Activated CD4-positive, alpha-beta T cell treated with anti-CD3 and anti-CD28 coated beads for 36 hours (primary cell): ENCODE measurements at regions of chr11 and their contacts with region 1.

Region 1: GRCh38 chr11:130002846-130003716 is 446 bp upstream of the PRDM10 start:
- DNase-seq: peak; percentile 91
- ATAC-seq: peak; percentile 82
- H3K4me3 Mint-ChIP-seq: peak overlapping the region; percentile 90
- H3K27ac Mint-ChIP-seq: peak overlapping the region; percentile 100
- H3K4me1 Mint-ChIP-seq: peaks cover 32% of the 10 kb centered on the region
- H3K27me3 Mint-ChIP-seq: no peaks in the 10 kb centered on the region

Region 2: GRCh38 chr11:129279326-129280026 is 723.6 kb before region 1 on chr11:
- CTCF ChIA-PET with region 1: no interaction called
- POLR2A ChIA-PET with region 1: interaction called, 3 read pairs
- intact Hi-C with region 1: loop called in 1 of 2 experiments (anchors 1 kb)
- DNase-seq: peak; percentile 79
- ATAC-seq: peak; percentile 30
- H3K4me3 Mint-ChIP-seq: peak overlapping the region; percentile 76
- H3K27ac Mint-ChIP-seq: peak overlapping the region; percentile 90
- H3K4me1 Mint-ChIP-seq: peaks cover 41% of the 10 kb centered on the region
- H3K27me3 Mint-ChIP-seq: peaks cover 14% of the 10 kb centered on the region

Region 3: DNA sequence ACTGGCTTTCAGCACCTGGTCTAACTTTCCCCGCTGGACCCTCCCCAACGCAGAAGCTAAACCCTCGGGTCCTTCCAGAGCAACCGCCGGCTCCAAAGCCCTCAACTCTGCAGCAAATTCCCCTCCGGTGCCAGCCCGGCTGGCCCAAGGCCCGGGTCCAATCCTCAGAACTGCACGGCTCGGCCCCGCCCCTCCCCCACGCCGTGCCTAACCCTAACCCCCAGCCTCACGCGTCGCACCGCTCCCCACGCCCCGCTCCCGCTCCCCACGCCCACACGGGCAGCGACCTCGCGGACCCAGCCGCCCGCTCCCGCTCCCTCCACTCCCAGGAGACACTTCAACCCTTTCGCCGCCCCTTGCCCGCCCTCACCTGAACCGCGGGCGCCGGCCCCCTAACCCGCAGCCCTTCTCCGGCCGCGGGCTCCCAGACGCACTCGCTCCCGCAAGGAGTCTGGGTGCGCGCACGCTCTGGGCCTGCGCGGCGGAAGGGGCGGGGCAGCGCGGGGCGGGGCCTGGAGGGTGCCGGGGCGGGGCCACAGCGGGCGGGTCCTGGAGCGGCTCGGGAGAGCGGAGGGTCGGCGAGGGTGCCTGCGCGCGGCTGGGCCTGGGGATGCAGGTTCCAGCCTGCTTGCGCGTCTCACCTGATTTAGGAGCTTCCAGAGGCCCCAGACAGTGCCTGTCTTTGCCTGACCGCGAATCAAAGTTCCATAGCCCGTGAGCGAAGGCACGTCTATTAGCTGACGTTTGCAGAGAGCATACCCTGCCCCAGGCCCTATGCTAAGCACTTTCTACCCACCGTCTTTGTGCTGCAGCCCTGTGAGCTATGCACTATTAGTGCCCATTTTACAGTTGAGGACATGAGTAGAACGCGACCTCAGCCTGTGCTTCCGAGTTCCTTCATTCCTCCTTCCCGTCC is 107.7 kb before region 1 on chr11 and contains the start of gene NFRKB:
- CTCF ChIA-PET with region 1: interaction called, 3 read pairs
- POLR2A ChIA-PET with region 1: interaction called, 3 read pairs
- intact Hi-C with region 1: loop called in 1 of 2 experiments (anchors 1 kb)
- DNase-seq: peak; percentile 94
- ATAC-seq: peak; percentile 99
- H3K4me3 Mint-ChIP-seq: peak within 1 kb of the TSS; percentile 84
- H3K27ac Mint-ChIP-seq: peak within 1 kb of the TSS; percentile 71
- H3K4me1 Mint-ChIP-seq: peaks cover 41% of the 10 kb centered on the region
- H3K27me3 Mint-ChIP-seq: no peaks in the 10 kb centered on the region
- total RNA-seq, gene NFRKB: 27.3 to 31.0 TPM

Region 4: DNA sequence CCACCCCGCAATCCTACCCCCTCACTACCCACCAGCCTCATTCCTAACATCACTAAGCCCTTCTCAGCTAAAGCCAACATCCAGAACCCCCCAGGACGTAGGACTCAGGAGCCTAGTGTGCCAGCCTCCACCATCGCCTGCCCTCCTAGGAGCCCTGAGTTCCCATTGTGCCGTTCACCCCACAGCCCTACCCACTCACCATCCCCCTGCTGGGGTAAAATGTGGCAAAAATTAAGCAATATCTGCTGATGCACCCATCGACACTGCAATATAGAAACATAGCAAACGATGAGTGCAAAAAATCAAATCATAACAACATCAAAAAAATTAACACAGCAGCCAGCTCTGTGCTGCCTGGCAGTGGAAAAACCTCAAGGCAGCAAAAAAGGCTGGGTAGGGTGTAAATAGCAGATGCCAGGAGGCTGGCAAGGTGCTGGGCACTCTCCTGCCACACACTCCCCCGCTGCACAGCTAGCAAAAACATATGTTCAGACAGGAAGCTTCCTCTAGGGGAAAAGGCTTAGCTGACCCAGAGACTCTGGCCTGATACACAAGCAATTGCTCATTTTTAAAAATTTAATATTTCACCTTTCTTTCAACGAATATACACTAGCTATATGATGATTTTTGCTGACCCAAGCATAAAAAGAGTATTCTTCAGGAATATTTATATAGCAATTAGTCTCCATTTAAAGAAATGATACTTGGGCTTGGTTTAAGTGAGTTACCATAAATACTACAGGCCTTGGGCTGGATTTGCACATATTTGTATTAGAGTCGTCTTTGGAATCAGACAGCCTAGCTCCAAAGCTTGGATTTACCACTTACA is 34.3 kb before region 1 on chr11:
- CTCF ChIA-PET with region 1: no interaction called
- POLR2A ChIA-PET with region 1: no interaction called
- intact Hi-C with region 1: loop called in 1 of 2 experiments (anchors 1 kb)
- DNase-seq: no peak
- ATAC-seq: no peak
- H3K4me3 Mint-ChIP-seq: no peak overlapping the region
- H3K27ac Mint-ChIP-seq: no peak overlapping the region
- H3K4me1 Mint-ChIP-seq: peaks cover 6% of the 10 kb centered on the region
- H3K27me3 Mint-ChIP-seq: no peaks in the 10 kb centered on the region

Region 5: DNA sequence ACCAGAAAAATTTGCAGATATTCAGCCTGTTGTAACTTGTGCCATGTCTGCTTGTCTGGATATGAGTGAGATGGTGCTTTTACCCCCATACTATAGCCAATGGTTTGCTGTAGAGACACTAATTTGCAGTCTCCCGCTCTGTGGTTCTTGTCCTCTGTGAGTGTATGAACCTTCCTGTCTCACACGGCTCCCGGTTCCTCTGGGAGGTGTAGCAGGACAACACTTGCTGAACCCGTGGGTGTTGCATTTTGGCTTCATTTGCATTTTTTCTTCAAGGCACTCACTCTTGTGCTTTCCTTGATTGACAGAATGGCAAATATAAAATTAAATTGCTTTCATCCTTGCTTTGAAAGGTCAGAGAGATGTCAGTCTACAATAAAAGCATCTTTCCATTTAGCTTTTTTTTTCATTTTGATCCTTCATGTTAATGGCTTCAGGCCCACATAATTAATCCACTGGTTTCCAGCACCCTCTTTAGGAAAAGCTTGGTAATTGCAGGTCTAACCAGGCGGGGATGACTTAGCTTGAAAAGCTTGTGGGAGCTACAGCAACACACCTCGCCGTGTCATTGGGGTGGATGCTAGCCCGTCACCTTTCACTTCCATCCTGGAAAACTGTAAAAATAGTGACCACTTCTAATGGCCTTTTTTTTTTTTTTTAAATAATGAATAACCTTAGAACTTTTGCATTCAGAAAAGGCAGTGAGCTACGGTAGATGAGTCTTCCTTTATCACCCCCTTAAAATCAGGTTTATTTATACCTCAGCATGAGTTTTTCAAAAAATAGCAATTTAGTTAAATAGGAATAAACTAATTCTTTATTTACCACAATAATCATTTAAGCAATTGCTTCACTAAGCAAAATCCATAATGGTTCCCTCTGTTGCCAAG is 129.1 kb after region 1 on chr11:
- CTCF ChIA-PET with region 1: interaction called, 12 read pairs
- POLR2A ChIA-PET with region 1: no interaction called
- intact Hi-C with region 1: loop called in 1 of 2 experiments (anchors 1 kb)
- DNase-seq: peak; percentile 58
- ATAC-seq: peak; percentile 88
- H3K4me3 Mint-ChIP-seq: no peak overlapping the region
- H3K27ac Mint-ChIP-seq: no peak overlapping the region
- H3K4me1 Mint-ChIP-seq: no peaks in the 10 kb centered on the region
- H3K27me3 Mint-ChIP-seq: no peaks in the 10 kb centered on the region